ENCODE measurements at regions of chr6 and their contacts with region 1.

Region 1: GRCh38 chr6:117602151-117602898 is at the start of gene GOPC:
- DNase-seq: peak; percentile 96
- H3K4me3 Mint-ChIP-seq: peak within 1 kb of the TSS; percentile 99
- H3K27ac Mint-ChIP-seq: peak within 1 kb of the TSS; percentile 98
- H3K4me1 Mint-ChIP-seq: peaks cover 33% of the 10 kb centered on the region
- H3K27me3 Mint-ChIP-seq: no peaks in the 10 kb centered on the region
- total RNA-seq, gene GOPC: 7.2 to 7.5 TPM

Region 2: GRCh38 chr6:116615937-116616736 is 986.2 kb before region 1 on chr6 and contains the start of gene RSPH4A:
- CTCF ChIA-PET with region 1: no interaction called
- intact Hi-C with region 1: loop called (anchors 1 kb)
- DNase-seq: peak; percentile 85
- H3K4me3 Mint-ChIP-seq: peak within 1 kb of the TSS; percentile 82
- H3K27ac Mint-ChIP-seq: no peak within 1 kb of the TSS
- H3K4me1 Mint-ChIP-seq: peaks cover 12% of the 10 kb centered on the region
- H3K27me3 Mint-ChIP-seq: peaks cover 11% of the 10 kb centered on the region
- total RNA-seq, gene RSPH4A: not detected

Region 3: GRCh38 chr6:117265410-117266256 is 336.7 kb before region 1 on chr6 and contains the start of gene VGLL2:
- CTCF ChIA-PET with region 1: no interaction called
- intact Hi-C with region 1: loop called (anchors 2 kb)
- DNase-seq: no peak
- H3K4me3 Mint-ChIP-seq: peak within 1 kb of the TSS; percentile 51
- H3K27ac Mint-ChIP-seq: no peak within 1 kb of the TSS
- H3K4me1 Mint-ChIP-seq: peaks cover 8% of the 10 kb centered on the region
- H3K27me3 Mint-ChIP-seq: peaks cover 85% of the 10 kb centered on the region
- total RNA-seq, gene VGLL2: not detected

Region 4: GRCh38 chr6:117463762-117464665 is 138.3 kb before region 1 on chr6:
- CTCF ChIA-PET with region 1: interaction called, 4 read pairs
- intact Hi-C with region 1: loop called (anchors 1 kb)
- DNase-seq: peak; percentile 55
- H3K4me3 Mint-ChIP-seq: no peak overlapping the region
- H3K27ac Mint-ChIP-seq: peak overlapping the region; percentile 54
- H3K4me1 Mint-ChIP-seq: peaks cover 13% of the 10 kb centered on the region
- H3K27me3 Mint-ChIP-seq: peaks cover 20% of the 10 kb centered on the region

Region 5: GRCh38 chr6:117568831-117569410 is 33.4 kb before region 1 on chr6:
- CTCF ChIA-PET with region 1: interaction called, 12 read pairs
- intact Hi-C with region 1: loop called (anchors 1 kb)
- DNase-seq: no peak
- H3K4me3 Mint-ChIP-seq: no peak overlapping the region
- H3K27ac Mint-ChIP-seq: no peak overlapping the region
- H3K4me1 Mint-ChIP-seq: peaks cover 19% of the 10 kb centered on the region
- H3K27me3 Mint-ChIP-seq: no peaks in the 10 kb centered on the region

Region 6: GRCh38 chr6:117637770-117638169 is 35.4 kb after region 1 on chr6:
- CTCF ChIA-PET with region 1: no interaction called
- intact Hi-C with region 1: no loop called
- DNase-seq: no peak
- H3K4me3 Mint-ChIP-seq: no peak overlapping the region
- H3K27ac Mint-ChIP-seq: no peak overlapping the region
- H3K4me1 Mint-ChIP-seq: no peaks in the 10 kb centered on the region
- H3K27me3 Mint-ChIP-seq: peaks cover 12% of the 10 kb centered on the region

Region 7: GRCh38 chr6:117674991-117675657 is 72.8 kb after region 1 on chr6 and contains the start of gene NUS1:
- CTCF ChIA-PET with region 1: no interaction called
- intact Hi-C with region 1: loop called (anchors 1 kb)
- DNase-seq: peak; percentile 98
- H3K4me3 Mint-ChIP-seq: peak within 1 kb of the TSS; percentile 94
- H3K27ac Mint-ChIP-seq: peak within 1 kb of the TSS; percentile 93
- H3K4me1 Mint-ChIP-seq: peaks cover 46% of the 10 kb centered on the region
- H3K27me3 Mint-ChIP-seq: no peaks in the 10 kb centered on the region
- total RNA-seq, gene NUS1: 24.0 to 24.1 TPM

Measured in activated naive CD4-positive, alpha-beta T cell treated with anti-CD3 and anti-CD28 coated beads for 36 hours (primary cell).